Left cardiac atrium (tissue), 4 donors: ENCODE measurements at regions of chr2 and their contacts with region 1.

Region 1: DNA sequence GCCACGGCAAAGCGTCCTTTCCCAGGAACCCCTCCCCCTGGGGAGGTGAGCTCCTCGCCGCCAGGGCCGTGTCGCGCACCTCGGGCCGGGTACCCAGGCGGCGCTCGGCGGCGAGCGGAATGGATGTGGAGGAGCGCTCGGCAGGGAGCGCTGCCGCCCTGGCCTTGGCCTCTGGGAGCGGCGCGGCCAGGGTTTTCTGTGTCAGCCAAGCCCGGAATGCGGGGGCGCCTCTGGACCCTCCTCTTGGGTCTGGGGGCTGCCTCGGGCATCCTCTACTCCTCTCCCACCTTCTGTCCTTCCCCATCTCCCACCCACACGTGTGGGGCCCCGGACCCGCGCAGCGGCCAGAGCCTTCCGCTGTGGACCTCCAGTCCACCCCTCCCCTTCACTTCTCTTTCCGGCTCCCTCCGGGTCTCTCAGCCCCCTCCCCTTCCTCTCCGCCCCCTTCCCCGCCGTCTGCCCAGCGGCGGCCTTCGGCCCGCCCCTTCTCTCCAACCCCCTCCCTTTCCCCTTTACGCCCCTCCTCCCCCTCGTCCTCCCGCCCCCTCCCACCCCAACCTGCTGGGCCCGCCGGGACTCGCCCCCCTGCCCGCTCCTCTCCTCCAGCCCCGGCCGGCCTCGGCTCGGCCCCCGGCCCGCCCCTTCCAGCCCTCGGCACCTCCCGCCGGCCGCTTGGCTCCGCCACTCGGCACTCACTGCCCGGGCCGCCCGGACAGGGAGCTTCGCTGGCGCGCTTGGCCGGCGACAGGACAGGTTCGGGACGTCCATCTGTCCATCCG is at the start of gene MERTK:
- DNase-seq: peak; percentile 90
- ATAC-seq: peak; percentile 94 to 95
- total RNA-seq, gene MERTK: 11.8 to 12.6 TPM

Region 2: DNA sequence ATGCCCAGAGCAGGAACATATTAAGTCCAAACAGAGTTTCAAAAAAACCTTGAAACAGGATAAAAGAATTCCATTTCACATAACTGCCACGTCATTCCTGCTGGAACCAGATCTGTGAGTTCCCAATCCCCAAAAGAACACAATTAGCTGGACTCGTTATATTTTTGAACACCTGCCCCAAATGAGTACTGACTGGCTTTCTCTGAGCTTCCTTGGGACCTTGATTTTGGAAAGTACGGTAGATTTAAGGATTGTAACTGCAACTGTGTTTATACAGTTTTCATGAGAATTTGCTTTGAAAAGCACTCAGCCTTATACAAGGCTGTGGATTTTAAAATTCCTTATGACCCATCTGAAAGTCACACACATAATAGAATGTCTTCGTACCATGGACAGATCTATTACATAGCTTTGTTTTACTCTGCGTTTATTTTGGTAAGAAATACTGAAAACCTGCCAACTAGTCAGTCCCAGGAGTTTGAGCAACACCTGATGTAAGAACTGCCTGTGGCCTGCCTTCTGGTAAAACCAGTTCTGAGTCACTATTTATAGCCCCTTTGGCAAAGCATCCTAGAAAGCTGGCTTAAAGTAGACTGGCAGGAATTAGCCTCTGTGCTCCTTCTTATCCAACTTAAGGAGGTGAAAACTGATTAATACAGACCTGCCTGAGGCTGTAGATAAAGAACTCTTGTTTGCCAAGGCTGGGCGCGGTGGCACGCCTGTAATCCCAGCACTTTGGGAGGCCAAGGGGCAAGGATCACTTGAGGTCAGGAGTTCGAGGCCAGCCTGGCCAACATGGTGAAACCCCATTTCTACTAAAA is 48.4 kb after region 1 on chr2:
- intact Hi-C with region 1: loop called in 1 of 2 experiments (anchors 5 kb)
- DNase-seq: no peak
- ATAC-seq: peak; percentile 92 to 95

Region 3: DNA sequence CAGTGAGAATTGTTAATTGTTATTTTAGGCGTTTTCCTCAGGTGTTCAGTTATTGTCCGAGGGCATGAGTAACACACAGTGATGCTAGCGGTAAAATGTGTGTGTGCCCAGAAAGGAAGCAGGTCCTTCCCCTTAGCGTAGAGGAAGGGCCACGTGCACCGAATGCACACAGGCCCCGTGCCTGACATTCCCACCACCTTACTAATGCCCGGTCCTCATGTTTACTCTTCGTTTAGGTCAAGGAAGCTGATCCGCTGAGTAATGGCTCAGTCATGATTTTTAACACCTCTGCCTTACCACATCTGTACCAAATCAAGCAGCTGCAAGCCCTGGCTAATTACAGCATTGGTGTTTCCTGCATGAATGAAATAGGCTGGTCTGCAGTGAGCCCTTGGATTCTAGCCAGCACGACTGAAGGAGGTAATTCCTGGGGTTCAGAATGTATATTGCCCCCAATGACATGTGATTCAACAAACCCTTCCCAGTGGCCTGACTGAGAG is 77.0 kb after region 1 on chr2:
- intact Hi-C with region 1: loop called in 1 of 2 experiments (anchors 10 kb)
- DNase-seq: no peak
- ATAC-seq: peak in 1 of 2 donors; percentile 8

Region 4: DNA sequence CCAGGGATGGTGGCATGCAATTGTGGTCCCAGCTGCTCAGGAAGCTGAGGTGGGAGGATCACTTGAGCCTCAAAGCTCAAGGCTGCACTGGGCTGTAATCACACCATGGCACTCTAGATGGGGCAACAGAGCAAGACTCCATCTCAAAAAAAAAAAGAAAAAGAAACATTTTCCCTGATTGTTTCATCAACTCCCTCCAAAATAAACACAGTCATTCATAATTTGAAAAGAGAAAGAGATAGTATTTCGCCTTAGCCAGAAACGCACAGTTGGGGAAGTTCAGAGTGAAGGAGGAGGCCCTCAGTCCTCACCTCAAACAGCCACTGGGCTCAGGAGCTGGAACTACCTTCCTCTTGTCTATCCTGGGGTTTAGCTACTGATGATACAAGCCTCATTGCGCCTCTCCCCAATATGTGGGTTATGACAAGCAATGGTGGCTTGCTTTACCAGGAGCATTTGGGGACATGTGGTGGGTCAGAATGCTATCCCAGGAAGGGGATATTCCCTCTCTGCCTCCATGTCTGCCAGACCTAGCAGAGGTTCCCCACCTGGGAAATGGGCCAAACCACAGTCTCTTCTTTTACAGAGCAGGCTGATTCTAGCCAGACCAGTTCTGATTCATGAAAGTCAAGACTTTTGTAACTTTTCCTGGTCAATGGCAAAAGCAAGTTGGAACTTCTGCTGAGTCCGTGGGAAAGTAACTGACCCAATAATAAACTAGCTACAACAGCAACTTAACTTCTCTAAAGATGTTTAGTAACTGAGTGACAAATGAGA is 134.8 kb after region 1 on chr2:
- intact Hi-C with region 1: no loop called
- DNase-seq: peak; percentile 54
- ATAC-seq: peak; percentile 56 to 84

Region 5: GRCh38 chr2:112048887-112049286 is 150.8 kb after region 1 on chr2:
- intact Hi-C with region 1: loop called in 1 of 2 experiments (anchors 5 kb)
- DNase-seq: no peak
- ATAC-seq: peak; percentile 70 to 80